CD8-positive, alpha-beta memory T cell (primary cell): ENCODE measurements at regions of chr9 and their contacts with region 1.

Region 1: GRCh38 chr9:134391314-134392231 is 65.3 kb downstream of the RXRA start:
- DNase-seq: peak; percentile 70 to 92 (median 76)
- H3K4me3 ChIP-seq: peak overlapping the region; percentile 59
- H3K4me3 Mint-ChIP-seq: peak overlapping the region; percentile 80 to 90 (median 84)
- H3K27ac ChIP-seq: peak overlapping the region; percentile 85
- H3K27ac Mint-ChIP-seq: peak overlapping the region; percentile 96 to 99 (median 98)
- H3K4me1 ChIP-seq: peaks cover 58% of the 10 kb centered on the region
- H3K4me1 Mint-ChIP-seq: peaks cover 56 to 73% (median 59%) of the 10 kb centered on the region in 3 donors
- H3K27me3 ChIP-seq: no peaks in the 10 kb centered on the region
- H3K27me3 Mint-ChIP-seq: no peaks in the 10 kb centered on the region

Region 2: GRCh38 chr9:134407123-134407808 is 15.7 kb after region 1 on chr9:
- CTCF ChIA-PET with region 1: interaction called, 11 read pairs
- POLR2A ChIA-PET with region 1: interaction called, 6 read pairs
- DNase-seq: peak; percentile 65 to 84 (median 69)
- H3K4me3 ChIP-seq: peak overlapping the region; percentile 58
- H3K4me3 Mint-ChIP-seq: peak overlapping the region; percentile 37 to 81 (median 78)
- H3K27ac ChIP-seq: peak overlapping the region; percentile 29
- H3K27ac Mint-ChIP-seq: peak overlapping the region in 7 of 8 donors; percentile 29 to 88 (median 69)
- H3K4me1 ChIP-seq: peaks cover 52% of the 10 kb centered on the region
- H3K4me1 Mint-ChIP-seq: peaks cover 30 to 56% (median 37%) of the 10 kb centered on the region in 3 donors
- H3K27me3 ChIP-seq: no peaks in the 10 kb centered on the region
- H3K27me3 Mint-ChIP-seq: peaks cover 0 to 3% of the 10 kb centered on the region in 2 donors

Region 3: DNA sequence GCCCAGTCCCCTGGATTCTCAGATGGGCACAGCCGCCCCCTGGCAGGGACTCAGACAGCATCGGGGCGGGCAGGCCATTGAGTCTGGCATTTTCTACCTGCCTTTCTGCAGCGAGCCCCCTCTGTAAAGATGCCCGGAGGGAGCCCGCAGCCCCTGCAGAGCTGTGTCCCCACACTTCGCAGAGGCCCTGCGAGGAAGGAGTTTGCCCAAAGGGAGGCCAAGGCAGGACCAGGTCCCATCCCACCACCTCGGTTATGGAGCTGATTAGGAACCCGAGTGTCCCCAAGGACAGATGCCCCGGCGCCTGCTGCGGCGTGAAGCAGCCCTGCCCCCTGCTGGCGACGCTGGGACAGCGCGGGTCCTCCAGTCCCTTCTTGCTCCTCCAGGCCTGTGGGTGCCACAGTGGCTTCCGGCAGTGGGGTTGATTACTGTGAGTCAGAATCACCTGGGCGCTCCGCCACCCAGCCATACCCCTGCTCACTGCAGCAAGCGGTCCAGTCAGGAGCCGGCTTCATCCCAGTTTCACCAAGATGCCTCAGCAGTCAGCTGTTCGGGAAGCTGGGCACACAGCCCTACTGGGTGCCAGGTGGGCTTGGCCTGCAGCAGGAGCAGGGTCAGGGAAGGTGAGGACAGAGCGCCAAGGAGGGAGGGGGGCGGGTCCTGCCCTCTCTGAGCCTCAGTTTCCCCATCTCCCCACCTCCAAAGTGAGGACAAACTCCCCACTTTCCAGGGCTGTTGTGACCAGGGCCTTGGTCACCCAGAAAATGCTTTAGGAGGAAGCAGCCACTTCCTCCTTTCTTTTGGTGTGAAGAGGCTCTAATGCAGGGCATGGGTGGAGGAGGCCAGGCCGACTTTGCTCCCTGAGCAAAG is 51.8 kb after region 1 on chr9:
- CTCF ChIA-PET with region 1: interaction called, 13 read pairs
- POLR2A ChIA-PET with region 1: no interaction called
- DNase-seq: peak; percentile 82 to 93 (median 83)
- H3K4me3 ChIP-seq: no peak overlapping the region
- H3K4me3 Mint-ChIP-seq: peak overlapping the region in 2 of 7 donors; percentile 36 to 46
- H3K27ac ChIP-seq: no peak overlapping the region
- H3K27ac Mint-ChIP-seq: peak overlapping the region; percentile 15 to 85 (median 68)
- H3K4me1 ChIP-seq: peaks cover 7% of the 10 kb centered on the region
- H3K4me1 Mint-ChIP-seq: peaks cover 13 to 14% (median 14%) of the 10 kb centered on the region in 3 donors
- H3K27me3 ChIP-seq: peaks cover 5% of the 10 kb centered on the region
- H3K27me3 Mint-ChIP-seq: peaks cover 3 to 7% of the 10 kb centered on the region in 2 donors